ENCODE measurements at regions of chr12 and their contacts with region 1.

Region 1: DNA sequence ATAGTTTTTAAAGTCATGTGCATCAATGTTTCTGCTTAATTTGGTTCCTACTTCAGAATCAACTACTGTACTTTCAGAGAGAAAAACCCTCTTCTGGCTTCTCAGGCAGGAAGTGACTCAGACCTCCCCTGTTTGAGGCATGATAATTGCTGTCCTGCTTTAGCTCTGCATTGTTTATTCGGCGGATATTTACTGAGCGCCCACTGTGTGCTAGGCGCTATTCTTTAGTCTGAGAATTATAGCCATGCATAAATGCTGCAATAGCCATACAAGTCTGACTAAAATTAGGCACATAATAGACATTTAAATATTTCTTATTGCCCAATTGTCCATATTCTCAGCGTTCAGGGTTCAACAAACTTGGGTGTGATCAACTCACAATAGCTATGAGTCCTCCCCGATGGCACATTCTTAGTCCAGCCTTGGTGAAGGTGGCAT is 6.1 kb upstream of the AMIGO2 start:
- DNase-seq: peak in 1 of 2 experiments; percentile 94
- ATAC-seq: peak; percentile 48 to 67
- H3K4me3 ChIP-seq: no peak overlapping the region; the same call in 2 of the 3 replicates
- H3K27ac ChIP-seq: peak overlapping the region; percentile 97 to 100
- H3K4me1 ChIP-seq: peaks cover 73% of the 10 kb centered on the region
- CTCF ChIP-seq: no peak
- EP300 ChIP-seq: peak; percentile 94 to 95; a peak in 4 of 5 replicates
- POLR2A ChIP-seq: no peak
- RAD21 ChIP-seq: peak; percentile 23 to 69; a peak in 3 of 5 replicates

Region 2: GRCh38 chr12:47071241-47071852 is 14.5 kb before region 1 on chr12:
- CTCF ChIA-PET with region 1: interaction called, 4 read pairs
- POLR2A ChIA-PET with region 1: interaction called, 36 read pairs
- DNase-seq: peak in 1 of 2 experiments; percentile 72
- ATAC-seq: peak; percentile 4 to 11; a peak in 3 of 6 replicates
- H3K4me3 ChIP-seq: no peak overlapping the region
- H3K27ac ChIP-seq: peak overlapping the region; percentile 61 to 73; a peak in 5 of 6 replicates
- H3K4me1 ChIP-seq: peaks cover 83% of the 10 kb centered on the region
- CTCF ChIP-seq: peak; percentile 62
- EP300 ChIP-seq: no peak
- POLR2A ChIP-seq: no peak
- RAD21 ChIP-seq: peak; percentile 40 to 63; a peak in 3 of 5 replicates

Region 3: DNA sequence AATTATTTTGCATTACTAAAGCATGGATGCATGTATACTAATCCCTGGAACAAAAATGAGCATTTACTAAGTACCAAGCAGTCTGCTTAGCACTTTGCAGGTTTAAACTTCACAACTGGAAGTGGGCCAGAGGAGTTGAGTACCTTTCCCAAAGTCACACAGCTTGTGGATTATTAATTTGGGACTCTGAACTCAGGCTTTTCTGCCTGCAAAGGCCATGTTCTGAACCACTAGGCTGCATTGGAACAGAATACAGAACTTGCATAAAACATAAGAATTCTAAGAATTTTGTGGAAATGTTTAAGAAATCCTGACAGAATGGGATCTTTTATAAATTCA is 126.8 kb after region 1 on chr12:
- CTCF ChIA-PET with region 1: no interaction called
- POLR2A ChIA-PET with region 1: interaction called, 13 read pairs
- DNase-seq: no peak
- ATAC-seq: no peak; a peak in 1 of 6 replicates
- H3K4me3 ChIP-seq: no peak overlapping the region
- H3K27ac ChIP-seq: peak overlapping the region; percentile 91 to 92
- H3K4me1 ChIP-seq: peaks cover 78% of the 10 kb centered on the region
- CTCF ChIP-seq: no peak
- EP300 ChIP-seq: no peak
- POLR2A ChIP-seq: no peak
- RAD21 ChIP-seq: no peak; a peak in 1 of 5 replicates

Region 4: DNA sequence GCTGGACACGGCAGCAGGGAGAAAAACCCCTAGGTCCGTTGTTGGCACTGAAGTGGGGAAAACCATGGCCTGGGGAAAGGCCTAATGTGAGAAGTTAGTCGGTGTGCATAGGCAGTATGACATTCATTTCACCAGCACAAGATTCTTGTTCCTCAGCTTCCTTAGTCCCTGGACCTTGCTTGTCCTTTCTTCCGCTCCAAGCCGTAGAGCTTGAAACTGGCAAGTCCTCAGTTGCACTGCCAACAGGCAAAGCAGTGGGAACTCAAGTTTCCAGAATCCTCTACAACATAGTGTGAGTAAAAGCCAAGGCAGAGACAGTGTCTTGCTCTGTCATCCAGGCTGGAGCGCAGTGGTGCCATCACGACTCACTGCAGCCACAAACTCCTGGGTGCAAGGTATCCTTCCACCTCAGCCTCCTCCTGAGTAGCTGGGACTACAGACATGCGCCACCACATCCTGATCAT is 132.4 kb after region 1 on chr12:
- CTCF ChIA-PET with region 1: no interaction called
- POLR2A ChIA-PET with region 1: interaction called, 156 read pairs
- DNase-seq: no peak
- ATAC-seq: no peak
- H3K4me3 ChIP-seq: no peak overlapping the region
- H3K27ac ChIP-seq: peak overlapping the region; percentile 98 to 99
- H3K4me1 ChIP-seq: peaks cover 76% of the 10 kb centered on the region
- CTCF ChIP-seq: no peak
- EP300 ChIP-seq: no peak
- POLR2A ChIP-seq: no peak
- RAD21 ChIP-seq: no peak

Region 5: DNA sequence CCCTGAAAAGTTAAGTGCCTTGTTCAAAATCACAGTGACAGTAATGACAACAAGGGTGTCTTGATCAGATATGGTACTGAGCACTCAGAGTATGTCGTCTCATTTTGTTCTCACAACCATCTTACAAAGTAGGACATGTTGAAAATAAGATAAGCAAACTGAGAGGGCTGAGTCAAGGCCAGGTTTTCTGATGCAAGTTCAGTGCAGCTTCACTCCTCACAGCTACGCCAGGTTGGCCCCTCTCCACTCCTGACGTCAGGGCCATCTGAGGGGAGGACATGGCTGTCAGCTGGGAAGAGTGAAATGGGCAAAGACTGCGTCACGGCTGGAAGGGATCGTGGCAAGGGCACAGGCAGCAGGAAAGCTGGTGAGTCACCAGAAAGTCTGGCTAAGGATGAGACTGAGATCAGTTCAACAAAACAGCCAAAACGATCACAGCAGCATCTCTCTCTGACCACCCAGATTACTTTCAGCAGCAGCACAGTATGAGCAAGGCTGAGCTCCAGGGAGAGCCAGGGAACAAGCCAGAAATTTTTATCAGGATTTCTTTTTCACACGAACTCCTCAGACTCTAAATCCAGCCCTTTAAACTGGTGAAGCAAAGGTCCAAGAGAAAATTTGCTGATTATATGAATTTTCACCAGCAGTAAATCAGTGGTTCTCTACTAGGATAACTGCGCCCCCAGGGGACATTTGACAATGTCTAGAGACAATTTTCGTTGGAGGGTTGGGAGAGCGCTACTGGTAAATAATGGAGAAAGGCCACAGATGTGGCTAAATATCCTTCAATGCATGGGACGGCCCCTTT is 291.8 kb after region 1 on chr12:
- CTCF ChIA-PET with region 1: no interaction called
- POLR2A ChIA-PET with region 1: interaction called, 16 read pairs
- DNase-seq: peak; percentile 90 to 99
- ATAC-seq: peak; percentile 96 to 100
- H3K4me3 ChIP-seq: no peak overlapping the region
- H3K27ac ChIP-seq: peak overlapping the region; percentile 89 to 95
- H3K4me1 ChIP-seq: peaks cover 43% of the 10 kb centered on the region
- CTCF ChIP-seq: peak; percentile 49
- EP300 ChIP-seq: peak; percentile 99
- POLR2A ChIP-seq: no peak
- RAD21 ChIP-seq: peak; percentile 30 to 72